Activated T-helper 1 cell treated with anti-CD3 and anti-CD28 coated beads, Interleukin-12 subunit alpha, Interleukin-12 subunit beta, Interleukin-2, Interleukin-4 antibody, amounts not matched to agents 30 ng/mL and 10 ng/mL and 1 ng/mL, durations not matched to agents 14 hours and 24 hours and 36 hours (primary cell): ENCODE measurements at regions of chr2 and their contacts with region 1.

Region 1: GRCh38 chr2:74958274-74959105 is at the start of gene POLE4:
- DNase-seq: peak; percentile 89
- H3K4me3 Mint-ChIP-seq: peak within 1 kb of the TSS; percentile 85
- H3K27ac Mint-ChIP-seq: peak within 1 kb of the TSS; percentile 89
- H3K4me1 Mint-ChIP-seq: peaks cover 66% of the 10 kb centered on the region
- H3K27me3 Mint-ChIP-seq: no peaks in the 10 kb centered on the region
- total RNA-seq, gene POLE4: 48.4 and 56.7 TPM in 2 replicates

Region 2: GRCh38 chr2:73293534-73294171 is 1664.8 kb before region 1 on chr2 and contains the start of gene EGR4:
- intact Hi-C with region 1: loop called (anchors 5 kb)
- DNase-seq: peak; percentile 91
- H3K4me3 Mint-ChIP-seq: peak within 1 kb of the TSS; percentile 75
- H3K27ac Mint-ChIP-seq: peak within 1 kb of the TSS; percentile 63
- H3K4me1 Mint-ChIP-seq: peaks cover 14% of the 10 kb centered on the region
- H3K27me3 Mint-ChIP-seq: peaks cover 72% of the 10 kb centered on the region
- total RNA-seq, gene EGR4: 1.9 TPM in 2 replicates

Region 3: DNA sequence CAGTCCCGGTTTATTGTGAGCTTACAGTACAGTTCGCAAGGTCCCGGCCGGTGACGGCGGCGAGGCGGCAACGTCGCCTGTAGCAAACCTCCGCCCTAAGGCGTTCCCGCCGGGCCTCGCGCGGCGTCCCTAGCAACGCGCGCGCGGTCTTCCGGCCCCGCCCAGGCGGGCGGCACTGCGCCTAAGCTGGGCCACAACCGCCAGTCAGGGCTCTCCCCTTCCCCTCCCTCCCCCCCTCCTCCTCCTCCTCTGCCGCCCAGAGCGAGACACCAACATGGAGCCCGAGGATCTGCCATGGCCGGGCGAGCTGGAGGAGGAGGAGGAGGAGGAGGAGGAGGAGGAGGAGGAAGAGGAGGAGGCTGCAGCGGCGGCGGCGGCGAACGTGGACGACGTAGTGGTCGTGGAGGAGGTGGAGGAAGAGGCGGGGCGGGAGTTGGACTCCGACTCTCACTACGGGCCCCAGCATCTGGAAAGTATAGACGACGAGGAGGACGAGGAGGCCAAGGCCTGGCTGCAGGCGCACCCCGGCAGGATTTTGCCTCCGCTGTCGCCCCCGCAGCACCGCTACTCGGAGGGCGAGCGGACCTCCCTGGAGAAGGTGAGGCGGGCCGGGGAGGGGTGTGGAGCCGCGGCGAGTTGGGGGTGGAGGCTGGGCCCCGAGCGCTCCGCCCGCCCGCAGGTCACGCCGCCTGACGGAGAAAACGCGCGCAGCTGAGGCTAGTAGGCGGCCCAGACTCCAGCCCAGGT is 1572.7 kb before region 1 on chr2 and contains the start of gene ALMS1:
- intact Hi-C with region 1: loop called (anchors 5 kb)
- DNase-seq: peak; percentile 88
- H3K4me3 Mint-ChIP-seq: peak within 1 kb of the TSS; percentile 92
- H3K27ac Mint-ChIP-seq: peak within 1 kb of the TSS; percentile 90
- H3K4me1 Mint-ChIP-seq: peaks cover 37% of the 10 kb centered on the region
- H3K27me3 Mint-ChIP-seq: no peaks in the 10 kb centered on the region
- total RNA-seq, gene ALMS1: 18.2 and 19.4 TPM in 2 replicates

Region 4: DNA sequence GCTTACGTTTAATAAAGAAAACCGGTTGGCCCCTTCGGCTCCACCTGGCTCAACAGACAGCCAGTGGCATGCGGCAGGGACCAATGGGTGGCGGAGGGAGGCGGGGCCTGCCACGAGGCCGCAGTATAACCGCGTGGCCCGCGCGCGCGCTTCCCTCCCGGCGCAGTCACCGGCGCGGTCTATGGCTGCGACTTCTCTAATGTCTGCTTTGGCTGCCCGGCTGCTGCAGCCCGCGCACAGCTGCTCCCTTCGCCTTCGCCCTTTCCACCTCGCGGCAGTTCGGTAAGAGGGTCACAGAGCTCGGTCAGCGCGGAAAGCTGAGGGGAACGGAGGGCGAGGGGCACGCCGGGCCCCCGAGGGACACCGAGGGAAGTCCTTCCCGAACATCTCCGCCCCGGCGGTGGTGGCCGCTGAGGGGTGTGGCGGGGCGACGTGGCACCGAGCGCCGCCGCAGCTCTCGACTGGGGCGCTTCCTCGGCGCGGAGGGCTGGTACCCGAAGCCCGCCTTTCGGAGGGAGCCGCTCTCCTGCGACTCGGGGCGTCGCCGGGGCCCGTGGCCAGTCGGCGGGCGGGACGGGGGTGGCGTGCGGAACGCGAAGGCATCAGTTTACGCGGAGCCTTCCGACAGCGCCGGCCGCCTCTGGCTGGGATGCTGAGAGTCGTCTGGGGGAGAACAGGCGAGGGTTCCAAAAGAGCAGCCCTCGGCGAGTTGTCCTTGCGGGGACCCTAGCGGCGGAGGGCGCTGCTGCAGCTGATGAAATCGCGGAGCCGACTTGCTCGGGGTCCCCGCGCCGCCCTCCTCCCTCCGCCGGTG is 759.8 kb before region 1 on chr2 and contains the start of gene MTHFD2:
- intact Hi-C with region 1: loop called (anchors 2 kb)
- DNase-seq: peak; percentile 91
- H3K4me3 Mint-ChIP-seq: peak within 1 kb of the TSS; percentile 98
- H3K27ac Mint-ChIP-seq: peak within 1 kb of the TSS; percentile 100
- H3K4me1 Mint-ChIP-seq: peaks cover 59% of the 10 kb centered on the region
- H3K27me3 Mint-ChIP-seq: no peaks in the 10 kb centered on the region
- total RNA-seq, gene MTHFD2: 437 and 457 TPM in 2 replicates

Region 5: GRCh38 chr2:74587664-74588277 is 370.7 kb before region 1 on chr2:
- intact Hi-C with region 1: no loop called
- DNase-seq: peak; percentile 56
- H3K4me3 Mint-ChIP-seq: no peak overlapping the region
- H3K27ac Mint-ChIP-seq: peak overlapping the region; percentile 12
- H3K4me1 Mint-ChIP-seq: peaks cover 37% of the 10 kb centered on the region
- H3K27me3 Mint-ChIP-seq: peaks cover 17% of the 10 kb centered on the region

Region 6: GRCh38 chr2:74919827-74920226 is 38.7 kb before region 1 on chr2:
- intact Hi-C with region 1: no loop called
- DNase-seq: peak; percentile 52
- H3K4me3 Mint-ChIP-seq: no peak overlapping the region
- H3K27ac Mint-ChIP-seq: no peak overlapping the region
- H3K4me1 Mint-ChIP-seq: peaks cover 17% of the 10 kb centered on the region
- H3K27me3 Mint-ChIP-seq: peaks cover 21% of the 10 kb centered on the region

Region 7: DNA sequence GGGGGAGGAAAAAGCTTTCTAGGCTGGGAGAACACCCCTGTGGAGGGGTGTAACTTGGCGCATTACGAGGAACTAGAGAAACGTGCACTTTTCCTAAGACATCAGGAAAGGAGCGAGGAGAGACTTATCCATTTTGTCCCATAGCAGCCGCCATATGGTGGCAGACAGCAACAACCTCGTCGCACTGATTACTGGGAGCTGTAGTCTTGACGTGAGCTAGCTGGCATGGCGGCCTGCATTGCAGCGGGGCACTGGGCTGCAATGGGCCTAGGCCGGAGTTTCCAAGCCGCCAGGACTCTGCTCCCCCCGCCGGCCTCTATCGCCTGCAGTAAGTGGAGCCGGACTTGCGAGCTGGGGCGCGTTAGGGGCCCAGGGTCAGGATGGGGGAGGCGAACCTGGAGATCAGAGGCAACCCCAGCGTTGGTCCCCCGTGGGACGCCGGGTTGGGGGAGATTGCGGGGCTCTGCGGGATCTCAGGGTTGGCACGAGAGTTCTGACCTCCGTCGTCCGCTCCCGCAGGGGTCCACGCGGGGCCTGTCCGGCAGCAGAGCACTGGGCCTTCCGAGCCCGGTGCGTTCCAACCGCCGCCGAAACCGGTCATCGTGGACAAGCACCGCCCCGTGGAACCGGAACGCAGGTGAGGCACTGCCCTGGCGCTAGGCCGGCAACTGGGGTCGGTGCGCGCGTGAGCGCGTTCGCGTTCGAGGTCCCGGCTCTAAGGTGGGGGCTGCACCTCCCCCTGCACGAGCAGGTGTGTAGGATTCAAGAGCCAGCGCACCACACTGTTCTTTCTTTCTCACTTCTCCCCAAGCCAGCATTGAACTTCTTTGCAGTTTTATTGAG is 688.3 kb after region 1 on chr2 and contains the start of gene MRPL19:
- intact Hi-C with region 1: loop called (anchors 5 kb)
- DNase-seq: peak; percentile 70
- H3K4me3 Mint-ChIP-seq: peak within 1 kb of the TSS; percentile 97
- H3K27ac Mint-ChIP-seq: peak within 1 kb of the TSS; percentile 95
- H3K4me1 Mint-ChIP-seq: peaks cover 35% of the 10 kb centered on the region
- H3K27me3 Mint-ChIP-seq: peaks cover 1% of the 10 kb centered on the region
- total RNA-seq, gene MRPL19: 74.5 and 75.0 TPM in 2 replicates

Region 8: DNA sequence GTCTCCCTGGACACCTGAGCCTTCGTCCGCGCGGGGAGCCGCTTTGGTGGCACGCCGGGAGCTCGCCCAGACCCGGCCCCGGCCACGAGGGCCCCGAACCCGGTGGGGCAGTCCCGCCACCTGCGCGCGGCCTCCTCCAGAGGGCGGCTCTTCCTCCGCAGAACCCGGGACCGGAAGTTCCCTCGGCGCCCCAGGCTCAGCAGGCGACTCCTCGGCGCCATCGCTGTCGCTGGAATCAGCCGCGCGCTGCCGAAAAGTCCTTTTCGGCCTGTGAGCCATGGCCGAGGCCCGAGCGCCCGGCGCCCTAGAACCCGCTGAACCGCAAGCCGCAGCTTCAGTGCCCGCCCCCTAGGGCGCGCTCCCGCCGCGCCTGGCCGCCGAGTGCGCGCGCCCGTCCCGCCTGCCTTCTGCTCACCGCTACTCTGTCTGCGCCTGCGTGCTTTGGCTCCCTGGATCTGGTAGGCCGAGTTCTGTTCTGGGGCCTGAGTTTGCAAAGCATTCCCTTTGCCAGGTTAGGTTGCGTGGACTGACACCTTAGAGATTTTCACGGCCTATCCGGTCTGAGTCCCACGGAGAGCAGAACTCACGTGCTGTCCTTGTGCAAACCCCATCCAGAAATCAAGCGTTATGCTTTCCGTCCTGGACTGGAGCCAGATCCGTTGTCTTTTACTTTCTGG is 752.2 kb after region 1 on chr2 and contains the start of gene GCFC2:
- intact Hi-C with region 1: loop called (anchors 1 kb)
- DNase-seq: peak; percentile 83
- H3K4me3 Mint-ChIP-seq: peak within 1 kb of the TSS; percentile 92
- H3K27ac Mint-ChIP-seq: peak within 1 kb of the TSS; percentile 96
- H3K4me1 Mint-ChIP-seq: peaks cover 41% of the 10 kb centered on the region
- H3K27me3 Mint-ChIP-seq: peaks cover 4% of the 10 kb centered on the region
- total RNA-seq, gene GCFC2: 37.5 and 39.9 TPM in 2 replicates